ENCODE measurements at regions of chr2 and their contacts with region 1.

Region 1: DNA sequence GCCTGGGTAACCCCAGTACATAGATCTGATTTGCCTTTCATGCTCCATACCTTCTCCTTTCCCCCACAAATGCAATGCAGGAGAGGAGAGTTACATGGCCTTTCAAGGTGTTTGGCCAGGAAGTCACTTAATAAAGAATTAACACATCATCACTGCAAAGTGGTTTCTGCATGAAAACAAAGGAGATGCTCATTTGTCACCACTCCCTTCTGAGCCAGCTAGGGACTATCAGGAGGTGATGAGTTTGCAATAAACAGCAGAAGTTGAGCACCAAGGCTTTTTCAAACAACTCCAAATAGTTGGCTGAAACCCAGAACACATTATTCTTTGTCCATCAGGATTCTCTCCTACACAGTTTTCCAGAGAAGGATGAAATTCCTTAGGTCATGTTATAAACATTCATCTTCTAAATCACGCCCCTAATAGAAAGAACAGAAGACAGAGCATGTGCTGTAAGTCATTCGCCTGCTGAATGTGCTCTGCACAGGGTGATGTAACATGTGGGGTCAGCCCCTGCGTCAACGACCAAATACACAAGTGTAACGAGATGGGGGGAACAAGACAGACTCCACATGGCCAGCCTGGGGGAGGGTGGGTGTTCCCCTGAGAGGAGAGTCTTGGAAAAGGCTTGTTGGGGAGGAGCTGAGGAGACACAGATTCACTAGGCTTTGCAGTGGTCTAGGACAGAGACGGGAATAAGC is 87.3 kb upstream of the RMDN2 start:
- DNase-seq: peak in 1 of 2 donors; percentile 23
- ATAC-seq: no peak
- H3K4me3 ChIP-seq: no peak overlapping the region
- H3K27ac ChIP-seq: no peak overlapping the region
- H3K4me1 ChIP-seq: peaks cover 5% of the 10 kb centered on the region
- H3K27me3 ChIP-seq: no peaks in the 10 kb centered on the region
- CTCF ChIP-seq: no peak

Region 2: GRCh38 chr2:37855283-37856041 is 17.7 kb after region 1 on chr2:
- intact Hi-C with region 1: loop called in 1 of 2 experiments (anchors 2 kb)
- DNase-seq: peak; percentile 35 to 56
- ATAC-seq: peak; percentile 57 to 74 (median 68)
- H3K4me3 ChIP-seq: no peak overlapping the region
- H3K27ac ChIP-seq: peak overlapping the region; percentile 30
- H3K4me1 ChIP-seq: peaks cover 12% of the 10 kb centered on the region
- H3K27me3 ChIP-seq: no peaks in the 10 kb centered on the region
- CTCF ChIP-seq: no peak

Region 3: GRCh38 chr2:38115216-38116032 is 277.6 kb after region 1 on chr2:
- intact Hi-C with region 1: no loop called
- DNase-seq: peak; percentile 76 to 78
- ATAC-seq: peak; percentile 51 to 92 (median 70)
- H3K4me3 ChIP-seq: no peak overlapping the region
- H3K27ac ChIP-seq: no peak overlapping the region
- H3K4me1 ChIP-seq: no peaks in the 10 kb centered on the region
- H3K27me3 ChIP-seq: no peaks in the 10 kb centered on the region
- CTCF ChIP-seq: peak; percentile 86

Measured in psoas muscle (tissue), 8 donors.